ENCODE measurements at regions of chr16 and their contacts with region 1.

Region 1: DNA sequence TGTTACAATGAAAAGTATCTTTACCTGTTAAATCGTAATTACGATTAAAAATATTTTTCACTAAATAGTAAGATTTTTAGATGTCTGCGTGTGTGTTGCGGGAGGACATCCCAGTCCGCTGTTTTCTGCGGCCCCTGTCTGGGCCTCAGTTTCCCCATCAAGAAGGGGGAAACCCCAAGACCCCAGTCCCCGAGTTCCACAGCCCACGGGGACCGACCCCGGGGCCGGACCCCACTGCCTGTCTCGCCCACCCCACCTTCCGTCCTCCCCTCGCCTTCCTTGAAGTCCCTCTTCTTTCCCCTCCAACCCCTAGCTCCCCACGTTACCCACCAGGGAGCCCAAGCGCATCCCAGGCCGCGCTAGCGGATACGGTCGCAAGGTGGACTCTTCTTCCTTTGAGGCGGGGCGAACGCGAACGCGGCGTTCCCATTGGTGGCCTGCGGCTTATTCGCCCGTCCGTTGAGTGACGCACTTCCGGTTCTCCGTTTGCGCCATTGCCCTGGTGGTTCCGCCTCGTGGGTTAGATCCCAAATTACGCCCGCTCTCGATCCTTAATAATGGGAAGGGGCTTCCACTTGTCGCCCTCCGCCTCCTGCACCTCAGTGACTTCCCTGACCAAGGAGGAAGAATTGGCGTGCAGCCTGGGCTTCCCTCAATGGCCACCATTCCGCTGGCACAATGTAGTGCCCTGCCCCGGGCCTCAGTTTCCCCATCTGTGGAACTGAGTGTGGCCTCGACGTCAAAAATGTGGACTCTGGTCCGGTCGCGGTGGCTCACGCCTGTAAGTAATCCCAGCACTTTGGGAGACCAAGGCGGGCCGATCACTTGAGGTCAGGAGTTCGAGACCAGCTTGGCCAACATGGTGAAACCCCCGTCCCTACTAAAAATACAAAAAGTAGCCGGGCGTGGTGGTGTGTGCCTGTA is at the start of gene NSMCE1:
- DNase-seq: peak; percentile 99
- H3K4me3 ChIP-seq: peak within 1 kb of the TSS; percentile 69 to 93 (median 79)
- H3K27ac ChIP-seq: peak within 1 kb of the TSS; percentile 84 to 92 (median 88)
- H3K4me1 ChIP-seq: peaks cover 9 to 33% (median 32%) of the 10 kb centered on the region in 4 donors
- H3K27me3 ChIP-seq: no peaks in the 10 kb centered on the region
- CTCF ChIP-seq: peak in 2 of 3 experiments; percentile 31 to 38
- EP300 ChIP-seq: peak; percentile 1
- POLR2A ChIP-seq: peak; percentile 63
- total RNA-seq, gene NSMCE1: 49.7 to 68.8 (median 64.0) TPM

Region 2: DNA sequence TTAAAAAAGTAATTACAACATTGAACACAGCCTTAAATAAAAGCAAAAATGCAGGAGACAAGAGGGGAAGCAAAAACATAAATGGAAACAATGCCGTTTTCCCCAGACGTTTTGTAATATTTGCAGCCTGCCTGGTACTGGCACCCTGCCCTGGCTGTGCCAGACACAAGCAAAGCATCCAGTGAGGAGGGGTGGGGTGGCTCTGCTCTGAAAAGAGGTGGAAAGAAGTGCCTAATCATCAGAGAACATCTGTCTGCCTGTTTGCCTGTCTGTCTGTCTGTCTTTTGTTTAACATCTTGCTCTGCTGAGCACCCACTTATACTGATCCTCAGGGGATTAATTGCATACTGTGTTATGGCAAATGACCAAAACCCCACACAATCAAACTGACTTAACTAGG is 139.2 kb before region 1 on chr16:
- intact Hi-C with region 1: no loop called
- DNase-seq: no peak
- H3K4me3 ChIP-seq: no peak overlapping the region
- H3K27ac ChIP-seq: no peak overlapping the region
- H3K4me1 ChIP-seq: no peaks in the 10 kb centered on the region
- H3K27me3 ChIP-seq: peaks cover 0 to 15% (median 0%) of the 10 kb centered on the region in 4 donors
- CTCF ChIP-seq: no peak
- EP300 ChIP-seq: no peak
- POLR2A ChIP-seq: no peak

Region 3: GRCh38 chr16:27313422-27314160 is 45.0 kb after region 1 on chr16 and contains the start of gene IL4R:
- intact Hi-C with region 1: loop called (anchors 5 kb)
- DNase-seq: no peak
- H3K4me3 ChIP-seq: peak within 1 kb of the TSS; percentile 75 to 97 (median 88)
- H3K27ac ChIP-seq: peak within 1 kb of the TSS; percentile 97 to 99 (median 98)
- H3K4me1 ChIP-seq: peaks cover 38 to 52% (median 49%) of the 10 kb centered on the region in 4 donors
- H3K27me3 ChIP-seq: no peaks in the 10 kb centered on the region
- CTCF ChIP-seq: no peak
- EP300 ChIP-seq: no peak
- POLR2A ChIP-seq: peak; percentile 27
- total RNA-seq, gene IL4R: 72.7 to 167 (median 116) TPM

Measured in esophagus muscularis mucosa (tissue), 4 donors.